Activated naive CD4-positive, alpha-beta T cell treated with anti-CD3 and anti-CD28 coated beads for 36 hours (primary cell): ENCODE measurements at regions of chr9 and their contacts with region 1.

Region 1: GRCh38 chr9:35102926-35103659 is at the start of gene STOML2:
- DNase-seq: peak; percentile 96
- H3K4me3 Mint-ChIP-seq: peak within 1 kb of the TSS; percentile 99
- H3K27ac Mint-ChIP-seq: peak within 1 kb of the TSS; percentile 93
- H3K4me1 Mint-ChIP-seq: peaks cover 31% of the 10 kb centered on the region
- H3K27me3 Mint-ChIP-seq: no peaks in the 10 kb centered on the region
- total RNA-seq, gene STOML2: 165 to 168 TPM

Region 2: DNA sequence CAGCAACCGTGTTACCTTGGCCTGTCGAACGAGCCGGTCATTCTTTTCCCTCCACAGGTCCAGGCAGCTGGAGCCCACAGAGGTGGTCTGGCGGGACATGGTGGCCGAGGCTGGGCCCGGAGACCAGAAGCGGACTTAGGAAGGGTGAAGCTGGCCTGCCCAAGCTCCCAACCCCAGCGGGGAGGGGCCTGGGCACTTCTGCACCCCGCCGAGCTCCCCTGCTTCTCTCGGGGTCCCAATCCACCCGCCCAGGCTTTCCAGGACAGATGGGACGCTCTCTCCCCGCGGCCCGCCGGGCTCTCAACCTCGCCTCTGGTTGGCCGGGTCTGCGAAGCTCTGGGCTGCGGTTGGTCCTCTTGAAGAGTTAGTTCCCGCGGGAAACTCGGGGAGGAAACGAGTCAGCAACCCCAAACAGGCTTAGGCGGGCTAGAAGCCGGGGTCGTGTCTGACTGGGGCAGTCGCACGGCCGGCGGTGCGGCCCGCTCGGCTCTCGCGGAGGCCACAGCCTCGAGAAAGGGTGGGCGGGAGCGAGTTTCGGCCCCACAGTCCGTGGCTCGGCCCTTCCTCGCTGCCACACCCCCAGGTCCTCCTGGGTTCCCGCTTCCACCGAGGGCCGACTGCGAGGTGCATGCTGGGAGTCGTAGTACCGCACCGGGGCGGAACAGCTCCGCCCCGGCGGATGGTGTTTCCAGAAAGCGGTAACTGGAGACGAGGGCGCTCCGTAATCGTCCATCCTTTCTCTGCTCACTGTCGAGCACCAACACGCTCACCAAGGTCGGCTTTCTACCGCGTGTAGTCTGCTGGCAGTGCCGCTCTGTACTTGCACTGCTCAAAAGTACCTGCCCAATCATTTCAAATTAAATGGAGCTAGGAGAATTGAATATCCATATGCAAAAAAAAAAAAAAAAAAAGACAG is 23.4 kb before region 1 on chr9 and contains the start of gene FANCG:
- CTCF ChIA-PET with region 1: interaction called, 3 read pairs
- intact Hi-C with region 1: loop called (anchors 1 kb)
- DNase-seq: peak; percentile 92
- H3K4me3 Mint-ChIP-seq: peak within 1 kb of the TSS; percentile 94
- H3K27ac Mint-ChIP-seq: peak within 1 kb of the TSS; percentile 98
- H3K4me1 Mint-ChIP-seq: peaks cover 19% of the 10 kb centered on the region
- H3K27me3 Mint-ChIP-seq: no peaks in the 10 kb centered on the region
- total RNA-seq, gene FANCG: 109 to 118 TPM

Region 3: GRCh38 chr9:36765468-36766341 is 1662.6 kb after region 1 on chr9:
- CTCF ChIA-PET with region 1: no interaction called
- intact Hi-C with region 1: loop called (anchors 5 kb)
- DNase-seq: peak; percentile 95
- H3K4me3 Mint-ChIP-seq: peak overlapping the region; percentile 70
- H3K27ac Mint-ChIP-seq: no peak overlapping the region
- H3K4me1 Mint-ChIP-seq: no peaks in the 10 kb centered on the region
- H3K27me3 Mint-ChIP-seq: peaks cover 4% of the 10 kb centered on the region